Prostate gland (tissue), 2 donors: ENCODE measurements at regions of chr15 and their contacts with region 1.

Region 1: GRCh38 chr15:69058830-69059556 is 44.5 kb downstream of the NOX5 start:
- DNase-seq: peak; percentile 86
- H3K4me3 ChIP-seq: no peak overlapping the region
- H3K27ac ChIP-seq: no peak overlapping the region
- H3K4me1 ChIP-seq: no peaks in the 10 kb centered on the region
- H3K27me3 ChIP-seq: no peaks in the 10 kb centered on the region
- CTCF ChIP-seq: peak; percentile 78 to 96 (median 92)
- POLR2A ChIP-seq: no peak

Region 2: GRCh38 chr15:69014454-69014853 is 44.5 kb before region 1 on chr15 and contains the start of gene NOX5:
- intact Hi-C with region 1: no loop called
- DNase-seq: no peak
- H3K4me3 ChIP-seq: no peak within 1 kb of the TSS
- H3K27ac ChIP-seq: no peak within 1 kb of the TSS
- H3K4me1 ChIP-seq: no peaks in the 10 kb centered on the region
- H3K27me3 ChIP-seq: no peaks in the 10 kb centered on the region
- CTCF ChIP-seq: no peak
- POLR2A ChIP-seq: no peak
- total RNA-seq, gene NOX5: 0.05 to 5.8 TPM

Region 3: DNA sequence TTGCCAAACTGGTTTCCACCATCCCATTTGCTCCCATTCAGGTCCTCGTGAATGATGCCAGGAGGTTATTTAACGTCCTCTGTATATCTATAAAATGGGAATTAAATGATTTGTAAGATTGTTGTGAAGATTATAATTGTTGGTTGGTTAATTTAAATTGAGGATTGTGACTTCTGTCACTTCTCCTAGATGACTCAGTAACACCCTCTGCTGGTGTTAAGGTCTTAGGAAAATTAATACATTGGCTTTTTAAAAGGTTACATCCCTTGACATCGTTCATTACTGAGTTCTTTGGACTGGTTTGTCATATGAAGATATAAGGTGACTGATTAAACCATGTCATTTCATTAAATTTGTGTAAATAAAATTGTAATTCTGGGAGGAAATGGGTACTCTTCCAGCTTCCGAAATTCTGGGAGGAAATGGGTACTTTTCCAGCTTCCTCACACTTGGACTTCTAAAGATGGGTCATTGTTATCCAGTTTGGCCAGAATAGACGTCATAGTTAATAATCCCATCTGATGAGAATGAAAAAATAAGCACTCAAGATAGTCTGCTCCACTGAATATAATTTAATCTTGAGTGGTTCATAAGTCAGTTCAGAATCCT is 206.5 kb after region 1 on chr15:
- intact Hi-C with region 1: loop called (anchors 2 kb)
- DNase-seq: no peak
- H3K4me3 ChIP-seq: no peak overlapping the region
- H3K27ac ChIP-seq: no peak overlapping the region
- H3K4me1 ChIP-seq: no peaks in the 10 kb centered on the region
- H3K27me3 ChIP-seq: no peaks in the 10 kb centered on the region
- CTCF ChIP-seq: peak in 3 of 4 experiments; percentile 42 to 75 (median 70)
- POLR2A ChIP-seq: no peak

Region 4: GRCh38 chr15:69394556-69395282 is 335.7 kb after region 1 on chr15:
- intact Hi-C with region 1: loop called (anchors 2 kb)
- DNase-seq: peak; percentile 70
- H3K4me3 ChIP-seq: no peak overlapping the region
- H3K27ac ChIP-seq: no peak overlapping the region
- H3K4me1 ChIP-seq: peaks cover 4% of the 10 kb centered on the region
- H3K27me3 ChIP-seq: no peaks in the 10 kb centered on the region
- CTCF ChIP-seq: peak; percentile 78 to 96 (median 90)
- POLR2A ChIP-seq: no peak

Region 5: GRCh38 chr15:69468241-69469121 is 409.5 kb after region 1 on chr15:
- intact Hi-C with region 1: loop called (anchors 5 kb)
- DNase-seq: peak; percentile 70
- H3K4me3 ChIP-seq: no peak overlapping the region
- H3K27ac ChIP-seq: peak overlapping the region; percentile 56 to 70
- H3K4me1 ChIP-seq: peaks cover 11% of the 10 kb centered on the region
- H3K27me3 ChIP-seq: no peaks in the 10 kb centered on the region
- CTCF ChIP-seq: no peak
- POLR2A ChIP-seq: no peak

Region 6: DNA sequence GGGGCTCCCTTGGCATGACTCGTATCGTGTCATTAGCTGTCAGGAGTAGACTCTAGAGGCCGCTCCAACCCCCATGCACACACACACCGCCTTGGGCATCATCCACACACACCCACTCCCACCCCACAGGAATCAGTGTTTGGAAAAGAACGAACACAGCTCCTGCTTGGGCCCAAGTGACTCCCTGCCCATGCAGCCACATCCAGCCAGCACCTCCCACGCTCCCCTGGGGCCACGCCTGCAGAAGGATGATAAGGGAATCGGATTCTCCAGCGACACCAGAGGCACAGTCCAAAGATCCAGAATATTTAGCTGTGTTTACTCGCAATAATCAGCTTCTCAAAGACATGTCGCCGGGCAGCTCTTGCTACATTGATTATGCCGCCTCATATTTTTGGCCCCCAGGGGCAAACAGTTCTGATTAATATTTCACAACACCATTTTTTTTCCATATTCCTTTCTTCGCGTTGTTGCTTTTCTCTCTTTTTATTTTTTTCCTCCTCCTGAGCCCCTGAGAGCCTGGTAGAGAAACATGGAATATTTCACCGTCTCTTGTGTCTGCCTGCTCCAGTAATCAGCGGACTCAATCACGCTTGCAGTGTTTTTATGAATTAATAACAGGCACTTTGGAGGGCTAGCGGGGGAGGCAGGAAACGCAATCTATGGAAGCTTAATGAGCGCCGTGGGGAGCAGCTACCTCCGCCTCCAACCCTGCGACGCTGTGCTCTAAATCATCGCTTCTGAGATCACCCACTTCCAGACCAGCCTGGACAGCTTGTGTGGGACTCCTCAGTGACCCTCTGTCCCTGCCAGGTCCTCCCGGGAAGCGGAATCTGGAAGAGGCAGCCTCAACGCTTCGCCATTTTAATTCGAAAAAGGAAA is 817.3 kb after region 1 on chr15:
- intact Hi-C with region 1: no loop called
- DNase-seq: no peak
- H3K4me3 ChIP-seq: no peak overlapping the region
- H3K27ac ChIP-seq: no peak overlapping the region
- H3K4me1 ChIP-seq: no peaks in the 10 kb centered on the region
- H3K27me3 ChIP-seq: no peaks in the 10 kb centered on the region
- CTCF ChIP-seq: no peak
- POLR2A ChIP-seq: no peak